Aorta (tissue), 5 donors: ENCODE measurements at regions of chr7 and their contacts with region 1.

Region 1: DNA sequence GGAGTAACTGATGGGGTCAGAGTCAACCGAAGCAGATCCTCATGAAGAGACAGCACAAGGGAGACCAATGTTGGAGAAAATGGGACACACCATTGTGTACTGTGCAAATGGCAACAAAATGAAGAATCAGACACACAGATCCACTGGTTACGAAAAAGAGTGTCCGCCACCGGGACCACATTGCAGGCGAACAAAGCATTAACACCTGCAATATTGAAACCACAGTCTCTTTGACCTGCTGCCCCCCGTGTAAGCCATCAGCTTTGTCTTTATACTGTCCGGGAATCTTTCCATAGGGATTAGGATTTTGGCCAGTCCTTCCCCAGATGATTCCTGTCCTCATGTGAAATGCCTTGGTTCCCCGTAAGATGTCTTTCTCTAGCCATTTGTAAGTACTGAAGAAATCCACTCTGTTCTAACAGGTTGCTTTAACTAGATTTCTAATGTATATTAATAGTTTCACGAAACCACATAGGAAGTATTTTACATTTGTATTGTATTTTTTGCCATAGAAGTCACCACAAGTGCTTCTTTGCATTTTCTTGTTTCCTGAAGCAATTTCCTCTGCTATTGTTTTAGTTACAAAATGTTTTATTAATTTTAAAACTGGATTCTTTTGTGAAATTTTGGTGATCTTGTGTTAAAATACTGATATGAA is 140.8 kb upstream of the NFE2L3 start:
- DNase-seq: no peak
- ATAC-seq: no peak
- H3K4me3 ChIP-seq: no peak overlapping the region
- H3K27ac ChIP-seq: no peak overlapping the region
- H3K4me1 ChIP-seq: no peaks in the 10 kb centered on the region
- H3K27me3 ChIP-seq: no peaks in the 10 kb centered on the region

Region 2: DNA sequence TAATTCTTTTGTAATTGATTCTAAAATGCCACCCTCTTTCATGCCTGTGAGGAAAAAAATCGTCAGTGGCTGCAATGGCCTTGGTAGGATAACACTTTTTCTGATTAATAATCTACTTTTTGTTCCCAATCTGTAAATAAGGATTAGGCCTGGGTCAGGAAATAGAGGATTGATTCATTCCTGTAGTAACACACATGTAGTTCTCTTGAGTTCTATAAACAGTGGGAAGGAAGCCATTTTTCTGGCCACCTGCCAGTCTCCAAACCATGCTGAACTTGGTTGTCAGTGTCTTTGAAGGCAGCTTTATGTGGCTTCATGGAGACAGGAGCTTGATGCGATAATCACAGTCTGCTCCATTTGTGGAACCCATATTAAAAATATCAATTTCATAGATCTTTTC is 28.5 kb before region 1 on chr7:
- intact Hi-C with region 1: no loop called
- DNase-seq: no peak
- ATAC-seq: no peak
- H3K4me3 ChIP-seq: no peak overlapping the region
- H3K27ac ChIP-seq: no peak overlapping the region
- H3K4me1 ChIP-seq: no peaks in the 10 kb centered on the region
- H3K27me3 ChIP-seq: peaks cover 0 to 1% of the 10 kb centered on the region in 2 donors

Region 3: DNA sequence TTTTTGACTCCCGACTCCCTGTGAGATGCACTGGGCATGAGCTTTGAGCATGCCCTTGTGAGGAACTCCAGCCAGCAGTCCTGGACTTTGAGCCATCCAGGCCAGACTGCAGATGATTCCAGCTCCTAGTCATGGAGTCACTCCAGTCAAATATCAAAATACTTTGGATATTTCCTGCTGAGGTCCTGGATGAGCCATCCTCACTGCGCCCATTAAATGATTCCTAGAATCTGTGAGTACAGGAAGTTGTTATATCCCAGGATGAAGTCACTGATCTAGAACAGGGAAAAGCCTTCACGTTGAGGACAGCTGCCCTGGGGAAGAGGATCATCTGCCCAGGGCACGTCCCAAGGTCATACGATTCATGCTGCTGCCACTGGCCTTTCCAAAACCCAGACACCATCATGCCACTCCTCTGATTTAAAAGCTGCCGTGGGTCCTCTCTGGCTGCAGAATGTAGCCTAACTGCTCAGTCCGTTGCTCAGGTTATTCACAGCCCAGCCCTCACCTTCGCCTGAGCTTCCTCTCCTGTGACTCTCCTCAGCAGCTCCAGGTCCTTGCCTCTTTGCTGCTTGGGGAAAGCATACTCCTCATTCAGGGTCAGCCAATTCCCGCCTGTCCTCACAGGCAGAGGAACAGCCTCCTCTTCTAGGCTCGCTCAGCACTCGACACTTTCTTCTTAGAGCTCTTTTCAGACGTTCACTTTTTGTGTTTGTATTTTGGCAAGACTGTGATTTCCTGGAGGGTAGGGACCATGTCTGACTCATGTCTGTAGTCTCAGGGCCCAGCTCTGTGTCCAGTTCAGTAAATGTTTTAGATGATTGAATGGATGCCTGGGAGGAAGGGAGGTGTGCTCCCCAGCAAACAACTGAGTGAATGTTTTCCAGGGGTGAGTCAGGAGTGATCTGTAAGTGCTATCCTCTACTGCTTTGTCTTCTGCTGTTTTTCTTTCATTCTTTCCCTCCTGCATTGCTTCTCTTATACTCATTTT is 438.3 kb after region 1 on chr7:
- intact Hi-C with region 1: loop called in 1 of 2 experiments (anchors 10 kb)
- DNase-seq: no peak
- ATAC-seq: no peak
- H3K4me3 ChIP-seq: no peak overlapping the region
- H3K27ac ChIP-seq: no peak overlapping the region
- H3K4me1 ChIP-seq: no peaks in the 10 kb centered on the region
- H3K27me3 ChIP-seq: no peaks in the 10 kb centered on the region